ENCODE measurements at regions of chr12 and their contacts with region 1.

Region 1: GRCh38 chr12:77010691-77011548 is 54.4 kb downstream of the E2F7 start:
- DNase-seq: peak; percentile 78
- H3K4me3 Mint-ChIP-seq: no peak overlapping the region
- H3K27ac Mint-ChIP-seq: no peak overlapping the region
- H3K4me1 Mint-ChIP-seq: peaks cover 3% of the 10 kb centered on the region
- H3K27me3 Mint-ChIP-seq: peaks cover 16% of the 10 kb centered on the region

Region 2: GRCh38 chr12:76984566-76984965 is 26.4 kb before region 1 on chr12:
- CTCF ChIA-PET with region 1: no interaction called
- POLR2A ChIA-PET with region 1: no interaction called
- intact Hi-C with region 1: no loop called
- DNase-seq: no peak
- H3K4me3 Mint-ChIP-seq: no peak overlapping the region
- H3K27ac Mint-ChIP-seq: no peak overlapping the region
- H3K4me1 Mint-ChIP-seq: no peaks in the 10 kb centered on the region
- H3K27me3 Mint-ChIP-seq: peaks cover under 1% of the 10 kb centered on the region

Region 3: GRCh38 chr12:77025782-77026314 is 14.9 kb after region 1 on chr12:
- CTCF ChIA-PET with region 1: interaction called, 33 read pairs
- POLR2A ChIA-PET with region 1: no interaction called
- intact Hi-C with region 1: no loop called
- DNase-seq: no peak
- H3K4me3 Mint-ChIP-seq: no peak overlapping the region
- H3K27ac Mint-ChIP-seq: no peak overlapping the region
- H3K4me1 Mint-ChIP-seq: no peaks in the 10 kb centered on the region
- H3K27me3 Mint-ChIP-seq: no peaks in the 10 kb centered on the region

Region 4: DNA sequence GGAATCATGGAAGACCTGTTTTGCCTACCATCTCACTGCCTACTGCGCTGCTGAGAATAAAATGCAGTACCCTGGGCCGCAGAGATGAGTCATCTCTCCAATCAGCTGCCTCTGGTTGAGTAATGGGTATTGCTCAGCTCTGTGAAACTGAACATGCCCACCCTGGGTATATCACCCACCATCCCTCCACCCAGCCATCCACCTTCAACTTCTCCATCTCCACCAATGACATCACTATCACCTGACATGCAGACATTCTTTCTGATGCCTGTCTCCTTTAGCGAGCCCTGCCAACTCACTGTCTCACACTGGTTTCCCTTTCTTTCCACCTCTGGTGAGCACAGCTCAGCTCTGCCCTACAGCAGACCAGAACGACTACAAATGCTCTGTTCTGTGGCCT is 20.8 kb after region 1 on chr12:
- CTCF ChIA-PET with region 1: interaction called, 21 read pairs
- POLR2A ChIA-PET with region 1: no interaction called
- intact Hi-C with region 1: no loop called
- DNase-seq: no peak
- H3K4me3 Mint-ChIP-seq: no peak overlapping the region
- H3K27ac Mint-ChIP-seq: no peak overlapping the region
- H3K4me1 Mint-ChIP-seq: peaks cover 7% of the 10 kb centered on the region
- H3K27me3 Mint-ChIP-seq: no peaks in the 10 kb centered on the region

Region 5: DNA sequence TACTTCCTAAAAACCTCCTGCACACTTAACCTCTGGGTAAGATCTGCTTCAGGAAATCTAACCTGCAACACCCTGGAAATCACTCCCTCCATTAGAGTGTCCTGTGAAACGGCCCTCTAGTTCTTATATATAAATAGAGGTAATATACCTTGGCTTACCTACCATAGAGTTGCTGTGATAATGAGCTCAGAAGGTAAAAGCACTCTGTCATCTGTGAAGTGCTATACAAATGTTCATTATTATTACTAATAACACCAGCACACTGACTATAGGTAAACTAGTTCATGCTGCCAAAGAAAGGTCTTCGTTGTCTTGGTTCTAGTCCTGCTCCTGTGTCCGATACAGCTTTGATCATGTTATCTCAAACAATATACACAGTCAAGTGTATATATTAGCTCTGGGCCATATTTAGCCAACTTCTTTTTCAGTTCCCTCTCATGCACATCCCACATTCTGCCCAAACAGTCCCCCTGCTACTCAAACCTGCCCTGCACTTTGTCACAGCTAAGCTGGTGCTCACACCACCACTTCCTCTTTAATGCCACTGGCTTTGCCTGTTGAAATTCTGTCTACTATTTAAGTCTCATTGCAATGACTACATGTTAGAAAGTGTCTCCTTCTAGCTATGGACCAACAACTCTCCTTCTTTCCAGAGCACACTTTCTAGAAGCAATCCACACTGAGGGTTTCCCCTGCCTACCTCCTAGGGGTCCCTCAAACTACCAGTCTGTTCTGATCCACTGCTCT is 49.4 kb after region 1 on chr12:
- CTCF ChIA-PET with region 1: interaction called, 10 read pairs
- POLR2A ChIA-PET with region 1: no interaction called
- intact Hi-C with region 1: no loop called
- DNase-seq: no peak
- H3K4me3 Mint-ChIP-seq: no peak overlapping the region
- H3K27ac Mint-ChIP-seq: no peak overlapping the region
- H3K4me1 Mint-ChIP-seq: peaks cover 6% of the 10 kb centered on the region
- H3K27me3 Mint-ChIP-seq: peaks cover 16% of the 10 kb centered on the region

Region 6: GRCh38 chr12:77179515-77179914 is 168.6 kb after region 1 on chr12:
- CTCF ChIA-PET with region 1: no interaction called
- POLR2A ChIA-PET with region 1: no interaction called
- intact Hi-C with region 1: no loop called
- DNase-seq: no peak
- H3K4me3 Mint-ChIP-seq: no peak overlapping the region
- H3K27ac Mint-ChIP-seq: no peak overlapping the region
- H3K4me1 Mint-ChIP-seq: no peaks in the 10 kb centered on the region
- H3K27me3 Mint-ChIP-seq: no peaks in the 10 kb centered on the region

Measured in activated CD4-positive, alpha-beta memory T cell treated with anti-CD3 and anti-CD28 coated beads for 36 hours (primary cell).